GM13976 (cell line): ENCODE measurements at regions of chr9 and their contacts with region 1.

Region 1: GRCh38 chr9:36728651-36729520 is 156.2 kb downstream of the MELK start:
- DNase-seq: peak; percentile 79
- CTCF ChIP-seq: peak; percentile 92

Region 2: GRCh38 chr9:36400332-36401163 is 328.3 kb before region 1 on chr9:
- in situ Hi-C with region 1: loop called (anchors 25 kb)
- DNase-seq: peak; percentile 94
- CTCF ChIP-seq: peak; percentile 13

Region 3: GRCh38 chr9:36517131-36517530 is 211.8 kb before region 1 on chr9:
- in situ Hi-C with region 1: no loop called
- DNase-seq: no peak
- CTCF ChIP-seq: no peak

Region 4: DNA sequence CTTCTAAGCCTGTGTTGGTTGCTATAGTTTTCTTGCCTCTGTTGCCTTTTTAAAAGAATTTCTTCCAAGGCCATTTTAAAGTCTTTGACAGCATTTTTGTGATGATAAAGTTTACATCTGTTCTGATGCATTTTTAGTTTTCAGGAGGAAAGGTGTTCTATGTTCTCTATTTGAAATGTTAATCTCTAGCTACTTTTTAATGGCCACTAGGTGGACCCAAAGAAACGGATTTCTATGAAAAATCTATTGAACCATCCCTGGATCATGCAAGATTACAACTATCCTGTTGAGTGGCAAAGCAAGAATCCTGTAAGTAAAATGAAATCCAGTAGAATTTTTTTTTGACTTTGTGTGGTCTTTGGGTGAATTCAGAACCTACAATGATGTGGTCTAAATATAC is 96.0 kb before region 1 on chr9:
- in situ Hi-C with region 1: loop called (anchors 5 kb)
- DNase-seq: peak; percentile 33
- CTCF ChIP-seq: peak; percentile 42